Activated CD4-positive, alpha-beta memory T cell treated with anti-CD3 and anti-CD28 coated beads for 36 hours (primary cell): ENCODE measurements at regions of chr6 and their contacts with region 1.

Region 1: GRCh38 chr6:41182069-41183034 is 18.6 kb downstream of the TREML2 start:
- DNase-seq: peak; percentile 58
- H3K4me3 Mint-ChIP-seq: no peak overlapping the region
- H3K27ac Mint-ChIP-seq: no peak overlapping the region
- H3K4me1 Mint-ChIP-seq: peaks cover 13% of the 10 kb centered on the region
- H3K27me3 Mint-ChIP-seq: peaks cover 3% of the 10 kb centered on the region

Region 2: DNA sequence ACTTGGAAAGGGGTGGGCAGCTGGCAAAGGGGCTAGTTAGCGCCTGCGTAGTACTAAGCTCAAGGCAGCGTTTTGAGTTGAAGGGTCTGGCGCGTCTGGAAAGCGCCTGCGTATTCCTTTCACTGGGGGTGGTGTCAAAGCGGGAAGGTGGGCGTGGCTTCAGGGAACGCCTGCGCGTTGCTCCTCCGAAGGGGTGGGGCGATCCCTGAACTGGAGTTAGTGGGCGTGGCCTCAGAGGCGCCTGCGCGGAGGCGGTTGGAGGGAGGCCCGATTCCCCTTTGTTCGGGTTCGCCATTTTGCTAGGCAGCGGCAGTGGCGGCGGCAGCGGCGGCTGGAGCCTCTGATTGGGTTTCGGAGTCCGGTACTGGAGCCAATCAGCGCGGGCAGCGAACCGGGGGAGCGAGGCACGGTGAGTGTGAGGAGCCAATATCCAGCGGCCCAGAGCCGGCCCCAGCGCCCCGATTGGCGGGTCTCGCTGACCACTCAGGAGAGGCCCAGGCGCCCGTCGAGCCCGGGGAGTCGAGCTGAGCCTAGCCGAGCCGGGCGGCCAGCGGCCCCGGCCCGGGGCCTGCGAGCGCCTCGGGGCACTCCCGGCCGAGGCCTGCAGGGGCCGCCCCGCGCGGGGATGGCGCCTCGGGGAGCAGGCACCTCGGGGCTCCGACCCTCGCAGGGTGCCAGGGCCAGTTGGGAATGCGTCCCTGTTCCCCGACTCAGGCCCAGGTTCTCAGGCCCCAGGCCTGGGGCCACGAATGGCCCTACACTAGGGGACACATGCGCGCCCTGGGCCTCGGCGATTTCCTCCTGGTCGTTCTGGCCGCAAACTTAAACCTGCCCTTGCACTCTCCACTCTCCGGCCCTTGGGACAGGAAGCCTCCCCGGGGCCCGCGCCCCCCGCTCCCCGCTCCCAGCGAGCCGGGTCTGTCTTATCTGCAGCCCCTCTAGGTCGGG is 109.4 kb before region 1 on chr6 and contains the start of gene NFYA:
- CTCF ChIA-PET with region 1: interaction called, 8 read pairs
- POLR2A ChIA-PET with region 1: no interaction called
- intact Hi-C with region 1: loop called (anchors 5 kb)
- DNase-seq: peak; percentile 100
- H3K4me3 Mint-ChIP-seq: peak within 1 kb of the TSS; percentile 93
- H3K27ac Mint-ChIP-seq: peak within 1 kb of the TSS; percentile 98
- H3K4me1 Mint-ChIP-seq: peaks cover 52% of the 10 kb centered on the region
- H3K27me3 Mint-ChIP-seq: no peaks in the 10 kb centered on the region
- total RNA-seq, gene NFYA: 30.2 to 30.4 TPM

Region 3: DNA sequence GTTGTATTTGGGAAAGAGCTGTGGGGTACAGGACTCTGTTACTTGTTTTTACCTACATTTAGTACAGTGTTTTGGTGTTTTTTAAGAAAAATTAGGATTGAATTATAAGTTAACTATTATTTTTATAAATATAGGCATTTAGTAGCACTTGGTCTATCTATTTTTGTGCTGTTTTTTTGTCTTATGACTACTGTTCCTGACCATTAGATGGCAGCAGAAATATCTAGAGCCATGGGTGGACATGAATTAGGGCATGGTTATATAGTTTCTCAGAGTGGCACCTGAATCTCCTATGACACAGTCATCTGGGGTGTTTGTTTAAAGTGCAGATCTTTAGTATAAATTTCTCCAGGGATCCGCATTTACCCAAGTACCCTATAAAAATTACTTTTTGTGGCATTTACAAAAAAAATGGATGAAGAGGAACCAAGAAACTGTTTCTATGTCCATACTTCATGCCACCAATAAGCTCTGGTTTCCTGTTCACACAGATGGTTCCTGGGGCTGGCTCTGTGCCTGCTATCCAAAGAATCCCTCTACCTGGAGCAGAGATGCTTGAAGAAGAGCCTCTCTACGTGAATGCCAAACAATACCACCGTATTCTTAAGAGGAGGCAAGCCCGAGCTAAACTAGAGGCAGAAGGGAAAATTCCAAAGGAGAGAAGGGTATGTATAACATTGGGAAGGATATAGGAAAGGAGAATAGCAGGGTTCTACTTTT is 89.8 kb before region 1 on chr6:
- CTCF ChIA-PET with region 1: interaction called, 29 read pairs
- POLR2A ChIA-PET with region 1: no interaction called
- intact Hi-C with region 1: loop called (anchors 1 kb)
- DNase-seq: no peak
- H3K4me3 Mint-ChIP-seq: no peak overlapping the region
- H3K27ac Mint-ChIP-seq: no peak overlapping the region
- H3K4me1 Mint-ChIP-seq: no peaks in the 10 kb centered on the region
- H3K27me3 Mint-ChIP-seq: no peaks in the 10 kb centered on the region

Region 4: DNA sequence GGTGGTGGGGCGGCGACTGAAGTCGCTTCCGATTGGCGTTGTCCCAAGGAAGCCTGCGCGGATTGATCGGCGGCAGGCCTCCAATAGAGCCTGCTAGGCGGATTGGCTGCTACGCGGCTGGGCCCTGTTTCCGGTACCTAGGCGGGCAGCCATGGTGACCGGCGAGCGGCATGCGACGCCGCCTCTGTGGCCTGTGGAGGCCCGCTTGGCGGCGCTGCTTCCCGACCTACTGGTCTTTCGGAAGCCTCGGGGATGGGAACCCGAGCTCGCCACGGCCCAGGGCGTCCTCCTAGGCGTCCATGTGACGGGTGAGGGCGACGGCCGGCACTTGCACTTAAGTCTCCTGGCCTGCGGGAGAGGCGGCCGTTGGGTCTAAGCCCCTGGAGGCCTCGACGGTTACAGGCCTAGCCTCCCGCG is 81.5 kb before region 1 on chr6:
- CTCF ChIA-PET with region 1: interaction called, 14 read pairs
- POLR2A ChIA-PET with region 1: no interaction called
- intact Hi-C with region 1: no loop called
- DNase-seq: no peak
- H3K4me3 Mint-ChIP-seq: no peak overlapping the region
- H3K27ac Mint-ChIP-seq: no peak overlapping the region
- H3K4me1 Mint-ChIP-seq: no peaks in the 10 kb centered on the region
- H3K27me3 Mint-ChIP-seq: no peaks in the 10 kb centered on the region

Region 5: DNA sequence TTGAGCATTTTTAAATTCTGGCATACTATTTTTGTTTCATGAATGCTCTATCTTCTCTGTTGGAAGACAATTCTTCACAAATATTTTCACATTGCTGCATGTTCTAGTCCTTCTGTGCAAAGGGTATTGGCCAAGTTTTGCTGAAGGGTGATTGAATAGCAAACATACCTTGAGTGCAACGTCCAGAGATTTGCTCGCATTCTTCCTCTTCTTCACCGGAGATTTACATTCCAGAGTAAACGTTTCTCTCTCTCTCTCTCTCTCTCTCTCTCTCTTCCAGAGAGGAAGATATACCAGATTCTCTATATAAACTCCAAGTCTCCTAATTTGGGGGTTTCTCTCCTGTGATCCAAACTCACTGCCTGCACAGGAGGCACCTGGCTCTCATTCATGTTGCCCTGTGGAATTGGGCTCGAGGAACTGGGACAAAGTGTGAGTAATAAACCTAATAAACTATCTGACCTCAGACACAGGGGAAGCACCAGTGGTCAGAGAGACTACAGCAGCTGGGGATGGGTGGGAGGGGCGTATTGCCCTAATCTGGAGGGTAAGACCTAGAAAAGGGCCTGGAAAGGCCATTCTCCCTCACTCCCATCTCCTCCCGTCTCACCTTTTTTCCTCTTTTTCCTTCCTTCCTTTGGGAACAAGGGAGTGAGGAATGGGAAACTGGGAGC is 27.1 kb before region 1 on chr6:
- CTCF ChIA-PET with region 1: interaction called, 10 read pairs
- POLR2A ChIA-PET with region 1: no interaction called
- intact Hi-C with region 1: no loop called
- DNase-seq: no peak
- H3K4me3 Mint-ChIP-seq: no peak overlapping the region
- H3K27ac Mint-ChIP-seq: no peak overlapping the region
- H3K4me1 Mint-ChIP-seq: no peaks in the 10 kb centered on the region
- H3K27me3 Mint-ChIP-seq: peaks cover 2% of the 10 kb centered on the region

Region 6: DNA sequence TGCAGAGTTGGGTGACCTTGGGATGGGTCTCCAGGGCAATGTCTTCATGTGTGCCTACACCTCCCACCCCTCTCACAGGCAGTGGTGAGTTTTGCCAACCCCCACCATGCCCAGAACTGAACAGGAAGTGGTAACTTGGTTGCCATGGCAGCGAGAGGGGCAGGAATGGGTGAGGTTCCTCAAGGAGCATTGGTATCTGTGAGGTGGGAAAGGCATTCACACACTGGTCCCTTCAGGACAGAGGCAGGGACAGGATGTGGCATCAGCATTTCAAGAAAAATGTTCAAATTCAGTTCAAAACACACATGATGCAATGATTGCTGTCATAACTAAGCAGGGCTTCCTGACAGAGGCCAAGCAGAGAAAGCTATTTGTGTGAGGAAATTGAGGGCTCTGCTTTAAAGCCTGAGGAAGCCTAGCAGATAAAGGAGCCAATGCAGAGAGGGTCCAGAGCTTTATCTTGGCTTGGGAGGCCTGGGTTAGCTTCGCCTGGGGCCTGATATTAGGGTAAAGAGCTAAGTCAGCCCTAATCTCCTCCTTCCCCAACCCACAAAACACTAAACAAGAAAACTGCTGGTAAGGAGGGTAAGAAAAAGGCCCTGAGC is 18.0 kb after region 1 on chr6:
- CTCF ChIA-PET with region 1: interaction called, 14 read pairs
- POLR2A ChIA-PET with region 1: no interaction called
- intact Hi-C with region 1: loop called (anchors 1 kb)
- DNase-seq: peak; percentile 78
- H3K4me3 Mint-ChIP-seq: peak overlapping the region; percentile 69
- H3K27ac Mint-ChIP-seq: peak overlapping the region; percentile 95
- H3K4me1 Mint-ChIP-seq: peaks cover 47% of the 10 kb centered on the region
- H3K27me3 Mint-ChIP-seq: no peaks in the 10 kb centered on the region